B cell (primary cell): ENCODE measurements at regions of chr2 and their contacts with region 1.

Region 1: GRCh38 chr2:127591221-127591923 is 54.6 kb upstream of the GPR17 start:
- DNase-seq: peak; percentile 83
- ATAC-seq: peak; percentile 98
- H3K4me3 ChIP-seq: no peak overlapping the region
- H3K4me3 Mint-ChIP-seq: no peak overlapping the region
- H3K27ac ChIP-seq: no peak overlapping the region
- H3K27ac Mint-ChIP-seq: no peak overlapping the region
- H3K4me1 ChIP-seq: peaks cover 10 to 23% of the 10 kb centered on the region in 2 donors
- H3K4me1 Mint-ChIP-seq: peaks cover 28% of the 10 kb centered on the region
- H3K27me3 ChIP-seq: peaks cover 0 to 2% (median 0%) of the 10 kb centered on the region in 4 experiments
- H3K27me3 Mint-ChIP-seq: no peaks in the 10 kb centered on the region
- CTCF ChIP-seq: peak; percentile 95

Region 2: DNA sequence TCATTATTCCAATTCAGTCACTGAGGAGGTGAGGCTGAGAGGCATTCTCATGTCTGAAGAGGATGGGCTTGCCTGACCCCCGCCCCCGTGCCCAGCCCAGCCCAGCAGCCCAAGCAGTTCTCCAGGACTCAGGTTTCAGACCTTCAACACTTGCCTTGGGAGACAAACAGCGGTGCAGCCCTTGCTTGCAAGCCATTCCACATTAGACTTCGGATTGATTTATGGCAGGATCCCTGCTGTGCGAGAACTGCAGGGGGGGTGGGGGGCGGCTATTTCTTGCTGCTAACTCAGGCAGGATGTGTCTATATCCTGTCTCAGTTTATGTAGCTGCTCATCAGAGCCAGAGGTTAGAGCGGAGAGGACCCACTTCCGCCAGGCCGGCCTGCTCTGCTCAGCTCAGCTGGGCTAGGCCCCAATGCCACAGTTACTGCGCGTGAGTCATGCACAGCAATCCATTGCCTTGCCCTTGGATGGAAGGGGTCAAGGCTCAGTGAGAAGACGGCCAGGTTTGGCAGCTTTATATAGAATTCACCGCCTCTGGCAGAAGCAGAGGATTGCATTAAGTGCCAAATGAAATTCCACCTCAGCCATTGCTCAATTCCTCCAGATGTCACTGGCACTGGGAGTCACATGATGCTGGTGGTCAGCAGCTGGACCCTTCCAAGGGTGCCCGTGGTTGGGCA is 933.6 kb before region 1 on chr2:
- CTCF ChIA-PET with region 1: no interaction called
- POLR2A ChIA-PET with region 1: no interaction called
- intact Hi-C with region 1: no loop called
- DNase-seq: peak; percentile 64
- ATAC-seq: peak; percentile 60
- H3K4me3 ChIP-seq: peak overlapping the region; percentile 65 to 88 (median 73)
- H3K4me3 Mint-ChIP-seq: peak overlapping the region; percentile 99
- H3K27ac ChIP-seq: peak overlapping the region; percentile 80 to 81
- H3K27ac Mint-ChIP-seq: peak overlapping the region; percentile 94
- H3K4me1 ChIP-seq: peaks cover 47 to 56% of the 10 kb centered on the region in 2 donors
- H3K4me1 Mint-ChIP-seq: peaks cover 62% of the 10 kb centered on the region
- H3K27me3 ChIP-seq: no peaks in the 10 kb centered on the region
- H3K27me3 Mint-ChIP-seq: no peaks in the 10 kb centered on the region
- CTCF ChIP-seq: no peak

Region 3: DNA sequence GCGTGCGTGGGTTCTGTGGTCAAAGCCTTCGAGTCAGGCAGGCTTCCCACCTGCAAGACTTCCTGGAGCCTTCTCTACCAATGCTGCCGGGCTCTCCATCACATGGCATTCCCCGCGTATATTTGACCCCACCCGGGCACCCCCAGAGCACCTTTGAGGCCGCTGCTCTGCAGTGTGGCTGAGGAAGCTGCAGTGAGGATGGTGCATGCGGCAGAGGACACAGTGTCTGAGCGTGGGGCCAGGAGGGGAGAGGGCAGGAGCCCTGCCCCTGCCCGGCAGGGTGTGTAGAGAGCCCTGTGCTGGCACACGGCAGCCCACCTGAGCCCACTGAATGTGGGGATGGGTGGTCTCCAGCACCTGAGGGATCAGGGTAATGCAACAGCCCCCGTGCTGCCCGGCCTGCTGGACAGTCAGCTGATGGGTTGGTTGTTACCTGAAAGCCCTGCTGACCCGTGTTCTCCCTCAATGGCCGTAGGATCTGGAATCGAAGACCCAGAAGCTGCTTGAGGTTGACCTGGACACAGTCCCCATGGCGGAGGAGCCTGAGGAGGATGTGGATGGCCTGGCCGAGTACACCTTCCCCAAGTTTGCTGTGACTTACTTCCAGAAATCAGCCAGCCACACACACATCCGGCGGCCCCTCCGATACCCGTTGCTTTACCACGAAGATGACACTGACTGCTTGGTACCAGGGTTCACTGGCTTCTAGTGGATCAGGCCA is 17.8 kb after region 1 on chr2:
- CTCF ChIA-PET with region 1: interaction called, 31 read pairs
- POLR2A ChIA-PET with region 1: no interaction called
- intact Hi-C with region 1: no loop called
- DNase-seq: no peak
- ATAC-seq: no peak
- H3K4me3 ChIP-seq: no peak overlapping the region
- H3K4me3 Mint-ChIP-seq: no peak overlapping the region
- H3K27ac ChIP-seq: no peak overlapping the region
- H3K27ac Mint-ChIP-seq: no peak overlapping the region
- H3K4me1 ChIP-seq: peaks cover 5 to 25% of the 10 kb centered on the region in 2 donors
- H3K4me1 Mint-ChIP-seq: peaks cover 35% of the 10 kb centered on the region
- H3K27me3 ChIP-seq: no peaks in the 10 kb centered on the region
- H3K27me3 Mint-ChIP-seq: no peaks in the 10 kb centered on the region
- CTCF ChIP-seq: no peak

Region 4: GRCh38 chr2:127632592-127633489 is 41.5 kb after region 1 on chr2:
- CTCF ChIA-PET with region 1: interaction called, 553 read pairs
- POLR2A ChIA-PET with region 1: no interaction called
- intact Hi-C with region 1: no loop called
- DNase-seq: peak; percentile 80
- ATAC-seq: peak; percentile 66
- H3K4me3 ChIP-seq: no peak overlapping the region
- H3K4me3 Mint-ChIP-seq: peak overlapping the region; percentile 77
- H3K27ac ChIP-seq: peak overlapping the region; percentile 80 to 92
- H3K27ac Mint-ChIP-seq: peak overlapping the region; percentile 96
- H3K4me1 ChIP-seq: peaks cover 86 to 97% of the 10 kb centered on the region in 2 donors
- H3K4me1 Mint-ChIP-seq: peaks cover 91% of the 10 kb centered on the region
- H3K27me3 ChIP-seq: no peaks in the 10 kb centered on the region
- H3K27me3 Mint-ChIP-seq: no peaks in the 10 kb centered on the region
- CTCF ChIP-seq: no peak

Region 5: DNA sequence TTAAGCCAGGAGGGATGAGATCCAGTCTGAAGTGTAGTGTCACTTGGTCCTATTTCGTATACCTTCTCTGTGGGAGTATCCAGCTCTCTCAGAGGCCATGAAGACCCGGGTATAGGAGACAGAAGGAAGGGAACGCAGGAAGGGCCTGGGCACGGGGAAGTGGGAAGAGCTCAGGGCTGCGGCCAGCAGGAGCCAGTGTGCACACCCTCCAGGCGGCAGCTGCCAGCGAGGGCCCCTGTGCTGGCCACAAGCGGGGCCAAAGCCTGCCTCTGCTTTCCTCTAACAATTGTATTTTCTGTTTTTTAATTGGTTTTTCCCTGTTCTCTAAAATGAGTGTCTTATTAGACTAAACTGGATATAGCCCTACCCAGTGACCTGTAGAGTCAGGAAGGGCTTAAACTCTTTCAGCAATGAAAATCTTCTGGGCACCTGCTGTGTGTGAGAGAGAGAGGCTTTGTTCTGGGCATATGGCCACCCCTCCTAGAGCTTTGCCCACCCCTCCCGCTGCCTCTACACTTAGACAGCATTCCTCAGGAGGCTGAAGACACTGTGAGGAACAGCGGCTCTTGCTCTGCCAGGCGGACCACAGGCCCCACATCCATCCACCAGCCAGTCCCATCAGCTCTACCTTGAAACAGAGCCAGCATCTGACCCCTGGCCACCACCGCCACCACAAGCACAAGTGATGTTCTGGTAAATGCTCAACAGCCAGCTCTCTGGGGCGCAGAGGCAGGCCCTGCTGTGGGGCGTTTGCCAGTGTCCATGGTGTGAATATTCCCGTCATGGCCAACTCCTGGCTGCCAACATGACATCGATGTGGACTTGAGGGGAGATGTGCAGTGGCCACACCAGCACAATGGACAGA is 64.1 kb after region 1 on chr2:
- CTCF ChIA-PET with region 1: interaction called, 553 read pairs
- POLR2A ChIA-PET with region 1: interaction called, 13 read pairs
- intact Hi-C with region 1: no loop called
- DNase-seq: no peak
- ATAC-seq: no peak
- H3K4me3 ChIP-seq: no peak overlapping the region
- H3K4me3 Mint-ChIP-seq: no peak overlapping the region
- H3K27ac ChIP-seq: no peak overlapping the region
- H3K27ac Mint-ChIP-seq: no peak overlapping the region
- H3K4me1 ChIP-seq: peaks cover 22 to 38% of the 10 kb centered on the region in 2 donors
- H3K4me1 Mint-ChIP-seq: peaks cover 36% of the 10 kb centered on the region
- H3K27me3 ChIP-seq: peaks cover 0 to 1% (median under 1%) of the 10 kb centered on the region in 4 experiments
- H3K27me3 Mint-ChIP-seq: no peaks in the 10 kb centered on the region
- CTCF ChIP-seq: no peak

Region 6: DNA sequence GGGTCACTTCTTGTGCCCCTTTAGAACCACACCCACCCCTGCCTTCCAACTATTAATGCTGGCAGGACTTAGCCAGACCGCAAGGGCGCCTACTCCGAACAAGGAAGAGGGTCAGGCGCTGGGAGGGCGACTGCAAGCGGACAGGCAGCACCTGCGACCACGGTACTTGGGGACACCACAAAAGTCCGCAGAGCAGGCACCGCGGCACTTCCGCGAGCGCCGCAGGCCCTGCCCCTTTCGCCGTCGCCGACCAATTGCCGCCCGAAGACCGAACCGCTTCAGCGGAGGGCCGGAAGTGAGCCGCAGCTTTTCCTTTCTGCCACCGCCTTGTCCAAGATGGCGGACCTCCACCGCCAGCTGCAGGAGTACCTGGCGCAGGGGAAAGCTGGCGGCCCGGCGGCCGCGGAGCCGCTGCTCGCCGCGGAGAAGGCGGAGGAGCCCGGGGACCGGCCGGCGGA is 109.8 kb after region 1 on chr2 and contains the start of gene SFT2D3:
- CTCF ChIA-PET with region 1: interaction called, 36 read pairs
- POLR2A ChIA-PET with region 1: interaction called, 4 read pairs
- intact Hi-C with region 1: loop called (anchors 1 kb)
- DNase-seq: peak; percentile 95
- ATAC-seq: peak; percentile 74
- H3K4me3 ChIP-seq: peak within 1 kb of the TSS; percentile 69 to 84 (median 77)
- H3K4me3 Mint-ChIP-seq: peak within 1 kb of the TSS; percentile 98
- H3K27ac ChIP-seq: peak within 1 kb of the TSS; percentile 91 to 95
- H3K27ac Mint-ChIP-seq: peak within 1 kb of the TSS; percentile 100
- H3K4me1 ChIP-seq: peaks cover 29% of the 10 kb centered on the region in 2 donors
- H3K4me1 Mint-ChIP-seq: peaks cover 35% of the 10 kb centered on the region
- H3K27me3 ChIP-seq: no peaks in the 10 kb centered on the region
- H3K27me3 Mint-ChIP-seq: no peaks in the 10 kb centered on the region
- CTCF ChIP-seq: no peak
- total RNA-seq, gene SFT2D3: 13.6 and 14.2 TPM in 2 replicates